H1 (cell line): ENCODE measurements at regions of chr6 and their contacts with region 1.

Region 1: DNA sequence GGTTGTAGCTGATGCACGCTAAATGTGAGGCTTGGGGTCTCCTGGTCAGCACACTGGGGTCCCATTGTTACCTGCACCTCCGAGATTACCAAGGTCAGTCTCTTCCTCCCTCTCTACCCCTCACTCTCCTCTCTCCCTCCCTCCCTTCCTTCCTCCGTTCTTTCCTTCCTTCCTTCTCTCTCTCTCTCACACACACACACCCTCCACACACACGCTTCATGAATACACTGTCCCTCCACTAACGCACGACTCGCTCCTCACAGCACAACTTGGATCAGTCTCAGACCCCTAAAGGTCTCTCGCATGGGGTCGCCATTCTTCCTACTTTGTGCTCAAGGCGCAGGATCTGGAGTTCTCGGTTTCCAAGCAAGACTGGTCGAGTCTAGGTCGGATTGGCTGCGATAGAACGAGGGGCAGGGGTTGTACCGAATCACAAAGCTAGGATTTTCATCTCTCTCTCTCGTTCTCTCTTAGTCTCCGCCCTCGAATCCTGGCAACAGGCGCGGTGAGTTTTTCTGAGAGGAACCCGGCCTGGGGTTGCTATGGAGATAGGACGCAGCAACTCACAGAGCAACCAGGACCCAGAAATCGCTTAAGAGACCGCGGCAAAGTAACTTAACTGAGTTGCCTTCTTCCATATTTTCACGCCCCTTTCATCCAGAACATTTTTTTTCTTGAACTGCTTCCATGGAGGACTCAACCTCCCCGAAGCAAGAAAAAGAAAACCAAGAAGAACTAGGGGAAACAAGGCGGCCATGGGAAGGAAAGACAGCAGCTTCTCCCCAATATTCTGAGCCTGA is at the start of gene RSPH4A:
- DNase-seq: peak; percentile 84
- H3K4me3 ChIP-seq: peak within 1 kb of the TSS; percentile 62 to 91 (median 72)
- H3K27ac ChIP-seq: peak within 1 kb of the TSS; percentile 93
- H3K4me1 ChIP-seq: peaks cover 0 to 4% (median under 1%) of the 10 kb centered on the region in 4 experiments; a peak in 5 of 7 replicates
- H3K27me3 ChIP-seq: peaks cover 0 to 11% (median 4%) of the 10 kb centered on the region in 4 experiments; a peak in 5 of 7 replicates
- CTCF ChIP-seq: no peak
- EP300 ChIP-seq: no peak
- POLR2A ChIP-seq: peak; percentile 97 to 98
- RAD21 ChIP-seq: peak; percentile 37 to 44
- total RNA-seq, gene RSPH4A: 0.52 and 0.59 TPM in 2 replicates

Region 2: GRCh38 chr6:116570856-116571682 is 45.1 kb before region 1 on chr6 and contains the start of gene RWDD1:
- CTCF ChIA-PET with region 1: interaction called, 4 read pairs
- POLR2A ChIA-PET with region 1: interaction called, 12 read pairs
- DNase-seq: peak; percentile 95 to 98
- H3K4me3 ChIP-seq: peak within 1 kb of the TSS; percentile 76 to 97 (median 90)
- H3K27ac ChIP-seq: peak within 1 kb of the TSS; percentile 27; the same call in 1 of the 2 replicates
- H3K4me1 ChIP-seq: peaks cover 0 to 3% (median 1%) of the 10 kb centered on the region in 4 experiments; a peak in 3 of 7 replicates
- H3K27me3 ChIP-seq: no peaks in the 10 kb centered on the region
- CTCF ChIP-seq: peak in 1 of 3 experiments; percentile 6; a peak in 1 of 4 replicates
- EP300 ChIP-seq: 0 out of 3 replicates have a peak, but pooled peaks of 1 of the 2 experiments have one; percentile 21
- POLR2A ChIP-seq: peak; percentile 69 to 75; a peak in 2 of 3 replicates
- RAD21 ChIP-seq: peak in 1 of 2 experiments; percentile 21; a peak in 1 of 4 replicates
- total RNA-seq, gene RWDD1: 35.2 and 36.8 TPM in 2 replicates

Region 3: DNA sequence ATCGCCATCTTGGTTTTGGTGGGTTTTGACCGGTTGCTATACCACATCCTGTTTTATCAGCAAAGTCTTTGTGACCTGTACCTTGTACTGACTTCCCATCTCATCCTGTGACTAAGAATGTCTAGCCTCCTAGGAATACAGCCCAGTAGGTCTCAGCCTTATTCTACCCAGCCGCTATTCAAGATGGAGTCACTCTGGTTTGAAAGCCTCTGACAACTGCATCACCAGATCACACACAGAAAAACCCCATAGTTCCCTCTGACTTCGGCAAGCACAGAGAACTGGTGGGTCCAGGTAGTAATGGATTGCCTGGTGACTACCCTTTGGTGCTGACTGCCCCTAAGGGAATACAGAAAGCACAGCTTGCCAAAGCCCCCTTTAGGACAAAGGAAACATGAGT is 10.2 kb before region 1 on chr6:
- CTCF ChIA-PET with region 1: no interaction called
- POLR2A ChIA-PET with region 1: interaction called, 14 read pairs
- DNase-seq: no peak
- H3K4me3 ChIP-seq: no peak overlapping the region
- H3K27ac ChIP-seq: no peak overlapping the region
- H3K4me1 ChIP-seq: peaks cover 0 to under 1% (median under 1%) of the 10 kb centered on the region in 4 experiments; a peak in 3 of 7 replicates
- H3K27me3 ChIP-seq: no peaks in the 10 kb centered on the region
- CTCF ChIP-seq: no peak
- EP300 ChIP-seq: no peak
- POLR2A ChIP-seq: no peak
- RAD21 ChIP-seq: no peak

Region 4: GRCh38 chr6:116633685-116634084 is 17.5 kb after region 1 on chr6:
- CTCF ChIA-PET with region 1: interaction called, 4 read pairs
- POLR2A ChIA-PET with region 1: interaction called, 25 read pairs
- DNase-seq: no peak
- H3K4me3 ChIP-seq: no peak overlapping the region
- H3K27ac ChIP-seq: no peak overlapping the region
- H3K4me1 ChIP-seq: no peaks in the 10 kb centered on the region
- H3K27me3 ChIP-seq: no peaks in the 10 kb centered on the region
- CTCF ChIP-seq: peak; percentile 30 to 65 (median 60)
- EP300 ChIP-seq: no peak
- POLR2A ChIP-seq: no peak
- RAD21 ChIP-seq: peak; percentile 35 to 47; a peak in 3 of 4 replicates

Region 5: GRCh38 chr6:116963972-116964371 is 347.8 kb after region 1 on chr6:
- CTCF ChIA-PET with region 1: no interaction called
- POLR2A ChIA-PET with region 1: no interaction called
- DNase-seq: no peak
- H3K4me3 ChIP-seq: no peak overlapping the region
- H3K27ac ChIP-seq: no peak overlapping the region
- H3K4me1 ChIP-seq: no peaks in the 10 kb centered on the region
- H3K27me3 ChIP-seq: no peaks in the 10 kb centered on the region
- CTCF ChIP-seq: no peak
- EP300 ChIP-seq: no peak
- POLR2A ChIP-seq: no peak
- RAD21 ChIP-seq: no peak